ENCODE measurements at regions of chr1 and their contacts with region 1.

Region 1: DNA sequence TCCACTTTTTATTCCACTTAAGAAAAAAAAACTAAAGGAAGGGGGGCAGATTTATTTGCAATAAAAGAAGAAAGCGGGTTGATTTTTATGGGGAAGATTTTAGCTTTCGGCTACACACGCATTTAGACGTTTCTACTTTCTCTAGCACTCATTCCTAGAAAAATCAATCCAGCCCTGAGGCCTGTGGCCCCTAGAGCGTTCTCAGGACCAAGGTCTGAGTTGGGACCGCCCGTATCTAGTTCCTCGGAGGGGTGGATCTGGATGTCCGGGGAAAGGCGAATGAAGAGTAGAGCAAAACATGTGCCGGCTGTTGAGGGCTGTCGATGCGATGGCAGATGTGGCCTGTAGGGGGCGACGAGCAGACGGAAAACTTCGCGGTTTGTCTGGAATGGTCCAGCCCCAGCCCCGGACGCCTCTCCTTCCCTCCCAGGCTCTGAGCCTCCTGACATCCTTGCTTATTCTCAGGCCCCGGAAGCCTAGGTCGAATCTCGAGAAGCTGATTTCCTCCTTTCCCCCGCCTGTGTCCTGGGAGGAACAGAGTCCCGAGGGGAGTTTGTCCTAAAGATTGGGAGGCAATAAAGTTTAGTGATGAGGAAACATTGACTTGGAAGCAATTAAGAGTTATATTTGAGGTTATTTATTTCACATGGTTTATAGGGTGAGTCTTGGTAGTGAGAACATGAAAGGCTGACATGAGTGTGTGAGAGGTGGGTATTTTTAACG is 5.2 kb downstream of the FOXD3 start:
- DNase-seq: peak; percentile 57
- H3K4me3 ChIP-seq: no peak overlapping the region
- H3K27ac ChIP-seq: no peak overlapping the region
- H3K4me1 ChIP-seq: no peaks in the 10 kb centered on the region
- H3K27me3 ChIP-seq: peaks cover 74 to 100% of the 10 kb centered on the region in 2 experiments
- CTCF ChIP-seq: peak; percentile 82 to 90
- POLR2A ChIP-seq: no peak

Region 2: GRCh38 chr1:63359561-63359960 is 32.0 kb after region 1 on chr1:
- CTCF ChIA-PET with region 1: interaction called, 12 read pairs
- POLR2A ChIA-PET with region 1: no interaction called
- dilution Hi-C with region 1: no loop called
- intact Hi-C with region 1: no loop called
- DNase-seq: no peak
- H3K4me3 ChIP-seq: no peak overlapping the region
- H3K27ac ChIP-seq: no peak overlapping the region
- H3K4me1 ChIP-seq: no peaks in the 10 kb centered on the region
- H3K27me3 ChIP-seq: peaks cover 2 to 10% of the 10 kb centered on the region in 2 experiments
- CTCF ChIP-seq: no peak
- POLR2A ChIP-seq: no peak

Region 3: DNA sequence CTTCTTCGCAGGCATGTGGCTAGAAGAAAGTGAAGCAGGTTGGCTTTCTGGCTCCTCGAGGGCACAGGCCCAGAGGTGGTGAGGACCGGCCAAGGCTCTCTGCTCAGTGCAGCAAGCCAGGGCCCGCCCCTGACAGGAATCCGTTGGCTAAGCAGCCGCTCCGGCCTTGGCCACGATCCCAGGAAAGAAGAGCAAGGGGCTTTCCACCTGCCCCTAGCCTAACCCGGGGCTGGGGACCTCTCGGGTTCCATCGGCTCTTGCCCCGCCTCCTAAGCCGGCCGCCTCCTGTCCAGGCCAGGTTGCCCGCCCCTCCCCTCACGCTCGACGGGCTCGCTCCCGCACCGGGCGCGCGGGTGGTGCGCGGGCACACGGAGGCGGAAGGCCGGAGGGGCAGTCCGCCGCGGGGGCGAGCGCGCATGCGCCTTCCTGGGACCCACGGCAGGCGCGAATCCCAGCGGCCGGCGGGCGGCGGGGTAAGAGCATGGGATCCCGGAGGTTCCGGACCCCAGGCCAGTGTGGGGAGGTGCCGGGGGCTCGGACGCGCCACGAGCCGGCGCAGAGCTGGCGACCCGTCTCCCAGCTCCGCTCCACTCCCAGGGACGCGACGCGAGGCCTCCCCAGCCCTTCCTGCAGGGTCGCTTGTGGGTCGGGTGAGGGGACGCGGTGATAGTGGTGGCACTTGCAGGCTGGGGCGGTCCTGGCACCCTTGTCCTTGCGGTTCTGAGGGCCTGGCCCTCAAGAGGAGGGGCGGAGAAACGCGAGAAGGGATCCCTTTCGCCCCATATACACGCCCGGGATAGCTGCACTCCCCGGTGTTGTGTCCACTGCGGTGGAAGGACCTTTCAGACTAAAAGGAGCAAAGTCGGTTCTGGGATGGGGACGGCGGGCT is 39.9 kb after region 1 on chr1 and contains the start of gene ALG6:
- CTCF ChIA-PET with region 1: no interaction called
- POLR2A ChIA-PET with region 1: no interaction called
- dilution Hi-C with region 1: no loop called
- intact Hi-C with region 1: loop called (anchors 2 kb)
- DNase-seq: peak; percentile 95
- H3K4me3 ChIP-seq: peak within 1 kb of the TSS; percentile 29 to 92 (median 65)
- H3K27ac ChIP-seq: no peak within 1 kb of the TSS
- H3K4me1 ChIP-seq: peaks cover 10% of the 10 kb centered on the region
- H3K27me3 ChIP-seq: no peaks in the 10 kb centered on the region
- CTCF ChIP-seq: no peak
- POLR2A ChIP-seq: peak; percentile 88
- total RNA-seq, gene ALG6: 14.4 and 17.3 TPM in 2 replicates

Region 4: DNA sequence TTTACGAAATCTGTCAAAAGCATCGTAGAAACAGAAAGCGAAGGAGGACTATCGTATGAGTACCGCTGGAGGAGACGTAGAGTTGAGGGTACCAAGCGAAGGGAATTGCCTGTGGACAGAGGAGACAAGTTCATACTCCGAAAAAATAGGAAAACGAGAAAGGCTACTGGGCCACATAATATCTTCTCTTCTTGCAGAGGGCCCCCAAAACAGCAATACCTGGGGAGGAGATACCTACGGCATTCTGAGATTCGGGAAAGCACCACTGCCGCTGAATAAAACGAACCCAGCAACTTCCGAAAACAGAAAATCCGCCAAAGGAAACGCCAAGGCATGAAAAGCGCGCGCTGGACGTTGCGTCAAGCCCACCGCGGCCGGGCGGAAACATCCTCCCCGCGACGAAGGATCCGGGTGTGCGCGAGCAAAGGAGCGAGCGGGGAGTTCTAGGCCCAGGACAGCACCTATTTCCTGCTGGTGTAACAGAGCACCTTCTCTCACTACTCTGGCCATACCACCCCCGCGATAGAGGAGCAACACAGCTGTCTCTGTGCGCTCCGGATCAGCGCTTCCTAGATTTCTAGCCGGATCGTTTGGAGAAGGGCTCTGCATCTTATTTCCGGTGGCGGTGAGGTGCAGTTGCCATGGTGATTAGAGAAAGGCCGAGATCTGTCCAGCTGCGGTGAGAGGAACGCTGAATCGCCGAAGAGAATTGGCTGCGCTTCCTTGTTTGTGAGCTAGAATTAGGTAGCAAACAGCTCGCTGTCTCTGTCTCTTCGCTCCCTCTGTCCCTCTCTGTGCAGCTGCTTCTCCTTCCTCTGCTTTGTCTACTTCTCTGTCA is 195.5 kb after region 1 on chr1 and contains the starts of genes EFCAB7 and ITGB3BP:
- CTCF ChIA-PET with region 1: interaction called, 5 read pairs
- POLR2A ChIA-PET with region 1: no interaction called
- dilution Hi-C with region 1: no loop called
- intact Hi-C with region 1: loop called (anchors 2 kb)
- DNase-seq: peak; percentile 91
- H3K4me3 ChIP-seq: peak within 1 kb of the TSS; percentile 55 to 95 (median 75)
- H3K27ac ChIP-seq: peak within 1 kb of the TSS; percentile 82
- H3K4me1 ChIP-seq: peaks cover 13% of the 10 kb centered on the region
- H3K27me3 ChIP-seq: no peaks in the 10 kb centered on the region
- CTCF ChIP-seq: no peak
- POLR2A ChIP-seq: peak; percentile 72
- total RNA-seq, gene EFCAB7: 6.1 and 7.1 TPM in 2 replicates
- total RNA-seq, gene ITGB3BP: 24.4 and 26.6 TPM in 2 replicates

Measured in endothelial cell of umbilical vein (primary cell).